ENCODE measurements at regions of chr17 and their contacts with region 1.

Region 1: DNA sequence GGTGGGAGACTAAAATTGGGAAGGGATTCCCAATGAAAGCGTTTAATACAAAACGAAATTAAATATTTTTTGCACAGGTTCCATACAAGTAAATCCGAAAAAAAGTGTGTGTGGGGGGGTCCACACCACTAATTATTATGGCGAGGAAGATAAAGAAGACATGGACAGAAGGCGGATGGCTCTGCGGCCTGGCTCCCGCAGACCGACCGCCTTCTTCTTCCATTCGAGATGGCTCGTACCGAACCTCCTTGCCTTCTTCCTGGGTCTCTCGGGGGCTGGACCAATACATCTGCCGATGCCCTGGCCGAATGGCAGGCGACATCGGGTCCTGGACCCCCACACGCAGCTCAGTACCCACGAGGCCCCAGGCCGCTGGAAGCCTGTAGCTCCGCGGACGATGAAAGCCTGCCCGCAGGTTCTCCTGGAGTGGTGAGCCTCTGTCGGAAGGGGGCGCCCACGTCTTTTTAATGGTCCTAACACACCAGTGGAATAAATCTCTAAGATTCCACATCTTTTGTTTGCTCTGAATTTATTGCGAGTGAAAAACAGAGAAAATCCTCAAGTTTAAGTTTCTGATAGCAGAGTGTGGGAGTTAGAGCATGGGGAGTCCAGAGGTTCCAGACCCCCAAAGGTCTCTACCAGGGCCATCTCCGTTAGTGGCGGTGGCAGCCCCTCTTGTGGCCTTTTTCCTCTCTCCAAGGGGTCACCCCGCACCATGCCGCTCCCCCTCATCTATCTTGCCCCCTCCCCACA is 1.4 kb downstream of the PRAC2 start:
- DNase-seq: peak; percentile 92
- H3K4me3 Mint-ChIP-seq: peak overlapping the region; percentile 3
- H3K27ac Mint-ChIP-seq: peak overlapping the region; percentile 74
- H3K4me1 Mint-ChIP-seq: peaks cover 14% of the 10 kb centered on the region
- H3K27me3 Mint-ChIP-seq: peaks cover 94% of the 10 kb centered on the region

Region 2: DNA sequence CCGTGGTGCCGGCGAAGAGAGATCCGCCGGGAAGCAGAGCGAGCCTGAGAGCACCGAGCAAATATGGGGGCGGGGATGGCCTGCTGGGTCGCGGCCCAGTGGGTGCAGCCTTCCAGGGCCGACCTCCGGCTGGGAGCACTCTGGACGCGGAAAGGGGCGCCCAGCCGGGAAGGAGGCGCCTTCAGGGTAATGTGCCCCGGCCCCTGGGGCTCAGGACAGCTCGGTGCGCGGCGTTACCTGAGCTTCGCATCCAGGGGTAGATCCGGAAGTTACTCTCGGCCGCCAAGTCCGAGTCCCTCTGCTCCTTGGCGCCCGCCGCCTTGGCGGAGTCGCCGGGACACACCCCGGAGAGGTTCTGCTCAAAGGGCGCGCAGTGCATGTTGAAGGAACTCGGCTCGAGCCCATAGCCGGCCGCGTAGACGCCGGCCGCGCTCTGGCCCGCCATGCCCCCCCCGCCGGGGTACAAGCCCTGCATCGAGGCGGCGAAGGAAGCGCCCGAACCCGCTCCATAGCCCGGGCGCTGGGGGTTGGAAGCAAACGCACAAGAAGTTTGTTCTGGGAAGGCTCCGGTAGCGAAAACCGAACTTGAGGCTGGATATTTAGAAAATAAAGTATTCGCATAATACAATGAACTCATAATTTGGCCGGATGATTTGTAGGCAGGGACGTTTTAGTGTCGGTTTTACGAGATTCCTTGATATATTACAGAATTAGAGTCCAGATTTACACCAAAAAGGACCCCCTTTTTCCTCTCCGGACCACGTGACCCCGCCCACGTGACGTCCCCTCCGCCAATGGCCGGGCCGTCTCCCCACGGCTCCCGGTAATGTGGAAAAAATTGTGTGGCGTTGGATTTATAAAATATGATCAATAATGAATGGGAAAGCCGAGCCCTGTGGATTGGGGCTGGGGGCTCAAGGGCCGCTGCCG is 113.9 kb before region 1 on chr17 and contains the start of gene HOXB7:
- intact Hi-C with region 1: loop called (anchors 2 kb)
- DNase-seq: peak; percentile 90
- H3K4me3 Mint-ChIP-seq: peak within 1 kb of the TSS; percentile 89
- H3K27ac Mint-ChIP-seq: peak within 1 kb of the TSS; percentile 56
- H3K4me1 Mint-ChIP-seq: peaks cover 32% of the 10 kb centered on the region
- H3K27me3 Mint-ChIP-seq: peaks cover 76% of the 10 kb centered on the region
- total RNA-seq, gene HOXB7: 0.30 and 0.36 TPM in 2 replicates

Region 3: DNA sequence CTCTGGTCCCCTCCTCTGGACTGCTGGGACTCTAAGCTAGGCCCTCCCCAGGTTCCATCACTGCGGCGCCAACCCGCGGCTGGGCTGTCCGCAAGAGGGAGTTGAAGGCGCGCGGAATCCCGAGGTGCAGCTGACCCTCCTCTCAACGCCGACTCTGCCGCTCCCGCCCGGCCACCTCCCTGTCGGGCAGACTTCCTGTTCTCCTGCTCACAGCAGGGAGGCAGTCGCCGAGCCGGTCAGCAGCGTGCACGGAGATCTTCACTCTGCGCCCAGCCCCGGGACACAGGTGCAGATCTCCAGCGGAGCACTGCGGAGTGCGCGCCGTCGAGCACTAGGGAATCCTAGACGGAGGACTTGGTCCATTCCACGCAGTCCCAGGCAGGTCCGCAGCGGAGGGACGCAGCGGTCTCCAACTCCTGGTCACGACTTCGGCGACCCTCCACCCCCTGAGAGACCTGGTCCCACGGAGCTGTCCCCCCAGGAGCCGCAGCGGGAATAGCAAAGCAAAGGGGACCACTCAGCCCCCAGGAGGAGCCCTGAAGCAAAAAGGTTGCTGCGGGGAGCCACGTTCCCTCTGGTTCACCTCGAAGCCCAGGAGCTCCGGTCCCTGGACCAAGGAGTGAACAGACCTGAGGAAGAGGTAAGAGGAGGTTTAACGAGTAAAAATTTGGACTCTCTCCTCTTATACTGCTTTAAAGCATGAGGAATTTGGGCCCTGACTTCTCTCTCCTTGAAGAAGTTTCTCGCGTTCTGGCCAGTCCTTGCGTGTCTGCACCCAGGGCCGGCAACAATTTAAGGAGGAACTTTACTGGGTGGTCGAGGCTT is 81.8 kb before region 1 on chr17:
- intact Hi-C with region 1: loop called (anchors 5 kb)
- DNase-seq: peak; percentile 57
- H3K4me3 Mint-ChIP-seq: no peak overlapping the region
- H3K27ac Mint-ChIP-seq: no peak overlapping the region
- H3K4me1 Mint-ChIP-seq: peaks cover 17% of the 10 kb centered on the region
- H3K27me3 Mint-ChIP-seq: peaks cover 91% of the 10 kb centered on the region

Region 4: GRCh38 chr17:48747445-48748363 is 23.3 kb after region 1 on chr17:
- intact Hi-C with region 1: loop called (anchors 2 kb)
- DNase-seq: no peak
- H3K4me3 Mint-ChIP-seq: no peak overlapping the region
- H3K27ac Mint-ChIP-seq: no peak overlapping the region
- H3K4me1 Mint-ChIP-seq: peaks cover 3% of the 10 kb centered on the region
- H3K27me3 Mint-ChIP-seq: peaks cover 85% of the 10 kb centered on the region

Region 5: GRCh38 chr17:48878918-48879898 is 154.8 kb after region 1 on chr17:
- intact Hi-C with region 1: loop called (anchors 2 kb)
- DNase-seq: peak; percentile 89
- H3K4me3 Mint-ChIP-seq: no peak overlapping the region
- H3K27ac Mint-ChIP-seq: no peak overlapping the region
- H3K4me1 Mint-ChIP-seq: peaks cover 8% of the 10 kb centered on the region
- H3K27me3 Mint-ChIP-seq: peaks cover 6% of the 10 kb centered on the region

Region 6: DNA sequence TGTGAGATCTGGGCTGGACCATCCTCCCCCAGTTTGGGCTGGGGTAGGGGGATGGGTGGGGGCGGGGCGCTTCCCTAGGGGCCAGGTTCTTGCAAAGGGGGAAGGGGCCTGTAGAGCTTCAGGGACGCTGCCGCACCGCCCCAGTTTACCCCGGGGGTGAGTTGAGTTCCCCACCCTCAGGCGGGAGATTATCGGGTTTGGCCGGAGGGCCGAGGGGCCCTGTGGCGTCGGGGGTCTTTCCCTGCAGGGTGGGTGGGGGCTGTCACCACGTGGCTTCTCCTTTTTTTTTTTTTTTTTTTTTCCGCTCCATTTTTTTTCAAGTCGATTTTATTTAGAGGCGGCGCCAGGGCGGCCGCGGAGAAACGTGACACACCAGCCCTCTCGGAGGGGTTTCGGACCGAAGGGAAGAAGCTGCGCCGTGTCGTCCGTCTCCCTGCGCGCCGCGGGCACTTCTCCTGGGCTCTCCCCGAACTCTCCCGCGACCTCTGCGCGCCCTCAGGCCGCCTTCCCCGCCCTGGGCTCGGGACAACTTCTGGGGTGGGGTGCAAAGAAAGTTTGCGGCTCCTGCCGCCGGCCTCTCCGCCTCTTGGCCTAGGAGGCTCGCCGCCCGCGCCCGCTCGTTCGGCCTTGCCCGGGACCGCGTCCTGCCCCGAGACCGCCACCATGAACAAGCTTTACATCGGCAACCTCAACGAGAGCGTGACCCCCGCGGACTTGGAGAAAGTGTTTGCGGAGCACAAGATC is 272.8 kb after region 1 on chr17 and contains the start of gene IGF2BP1:
- intact Hi-C with region 1: loop called (anchors 5 kb)
- DNase-seq: peak; percentile 69
- H3K4me3 Mint-ChIP-seq: peak within 1 kb of the TSS; percentile 69
- H3K27ac Mint-ChIP-seq: peak within 1 kb of the TSS; percentile 63
- H3K4me1 Mint-ChIP-seq: peaks cover 19% of the 10 kb centered on the region
- H3K27me3 Mint-ChIP-seq: peaks cover 83% of the 10 kb centered on the region
- total RNA-seq, gene IGF2BP1: 0.09 TPM in 1 of 2 replicates, not detected in the other

Region 7: DNA sequence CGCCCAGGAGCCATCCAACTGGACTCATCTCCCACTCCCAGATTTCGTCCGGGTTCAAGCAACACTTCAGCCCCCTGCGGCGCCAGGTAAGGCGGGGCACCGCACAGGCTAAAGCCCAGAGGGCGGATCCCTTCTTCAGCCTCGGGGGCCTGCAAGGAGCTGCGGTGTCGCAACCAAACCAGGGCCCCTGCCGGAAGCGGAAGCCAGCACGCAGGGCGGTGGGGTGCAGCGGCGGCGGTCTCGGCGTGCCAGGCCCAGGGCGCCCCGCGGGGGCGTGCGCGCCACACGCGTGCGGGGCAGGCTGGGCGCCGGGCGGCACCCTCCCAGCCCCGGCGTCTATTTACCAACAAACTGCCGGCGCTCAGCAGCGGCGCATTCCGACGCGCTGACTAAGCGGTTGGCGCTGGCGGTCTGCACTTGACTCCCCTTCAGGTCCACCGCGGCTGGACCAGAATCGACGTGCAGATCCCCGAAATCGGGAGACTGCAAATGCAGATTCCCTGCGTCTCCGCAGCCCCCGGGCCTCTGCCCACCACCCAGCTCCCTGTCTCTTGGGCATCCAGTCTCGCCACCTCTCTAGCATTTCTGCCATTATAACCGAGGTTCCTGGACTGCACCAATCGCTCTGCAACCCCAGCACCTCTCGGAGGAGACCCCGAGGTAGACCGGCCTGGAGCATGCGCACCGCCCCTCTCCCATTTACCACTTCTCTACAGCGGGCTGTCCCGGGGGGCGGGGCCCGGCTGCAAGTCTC is 1244.1 kb after region 1 on chr17:
- intact Hi-C with region 1: loop called (anchors 10 kb)
- DNase-seq: peak; percentile 89
- H3K4me3 Mint-ChIP-seq: peak overlapping the region; percentile 87
- H3K27ac Mint-ChIP-seq: peak overlapping the region; percentile 56
- H3K4me1 Mint-ChIP-seq: peaks cover 30% of the 10 kb centered on the region
- H3K27me3 Mint-ChIP-seq: peaks cover 90% of the 10 kb centered on the region

Measured in activated CD4-positive, alpha-beta T cell treated with anti-CD3 and anti-CD28 coated beads, Interleukin-2, amount 10 ng/mL, durations not matched to agents 24 days and 14 days (primary cell).